CD14-positive monocyte (primary cell): ENCODE measurements at regions of chr1 and their contacts with region 1.

Region 1: DNA sequence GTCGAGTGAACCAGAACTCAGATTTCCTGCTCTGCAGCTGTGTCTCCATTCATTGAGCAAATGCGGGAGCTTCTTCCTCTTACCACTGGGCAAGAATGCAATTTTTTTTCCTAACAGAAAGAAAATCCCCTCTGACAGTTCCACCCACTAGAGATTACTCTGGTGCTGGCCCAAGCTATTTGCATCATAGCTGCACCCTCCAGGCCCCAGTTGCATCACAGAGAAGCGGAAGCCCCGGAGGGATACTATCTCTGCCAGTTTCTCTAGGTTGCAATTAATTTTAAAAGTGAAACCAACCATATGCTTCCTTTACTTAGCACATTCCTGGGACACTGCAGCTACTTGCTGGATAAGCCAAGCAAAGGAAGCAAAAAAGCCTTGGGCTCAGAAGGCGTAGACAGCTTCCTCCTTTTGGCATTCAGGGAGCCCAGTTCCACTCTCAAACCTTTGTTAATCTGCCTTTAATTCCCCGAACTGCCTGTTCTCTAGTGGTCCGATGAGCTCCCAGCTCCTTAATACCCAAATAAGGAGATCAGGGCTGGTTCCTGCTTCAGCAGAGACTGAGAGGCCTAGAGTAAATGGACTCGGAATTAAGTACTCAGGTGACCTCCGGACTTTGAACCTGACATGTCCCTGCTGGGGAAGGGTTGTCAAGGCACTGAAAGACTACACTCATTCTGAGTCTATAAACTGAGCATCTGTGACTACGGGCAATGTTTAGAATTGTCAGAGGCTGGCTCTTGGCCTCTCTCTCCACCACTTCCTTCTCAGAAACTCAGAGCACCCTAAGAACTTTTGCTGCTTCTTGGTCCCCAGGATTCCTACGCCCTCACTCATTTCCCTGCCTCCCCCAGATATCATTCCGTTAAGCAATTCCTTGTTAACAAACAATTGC is 72.5 kb upstream of the TNFSF18 start:
- DNase-seq: peak; percentile 92 to 96 (median 95)
- H3K4me3 ChIP-seq: peak overlapping the region; percentile 27 to 97 (median 73)
- H3K4me3 Mint-ChIP-seq: peak overlapping the region; percentile 76 to 86
- H3K27ac ChIP-seq: peak overlapping the region; percentile 59 to 94
- H3K27ac Mint-ChIP-seq: peak overlapping the region; percentile 94 to 99 (median 97)
- H3K4me1 ChIP-seq: peaks cover 17 to 20% of the 10 kb centered on the region in 2 donors
- H3K4me1 Mint-ChIP-seq: peaks cover 27% of the 10 kb centered on the region
- H3K27me3 ChIP-seq: no peaks in the 10 kb centered on the region
- H3K27me3 Mint-ChIP-seq: peaks cover 0 to 5% (median 1%) of the 10 kb centered on the region in 3 donors
- CTCF ChIP-seq: no peak

Region 2: GRCh38 chr1:172818841-172819527 is 304.2 kb before region 1 on chr1:
- intact Hi-C with region 1: loop called in 1 of 2 experiments (anchors 10 kb)
- DNase-seq: peak; percentile 77 to 82 (median 82)
- H3K4me3 ChIP-seq: no peak overlapping the region
- H3K4me3 Mint-ChIP-seq: no peak overlapping the region
- H3K27ac ChIP-seq: peak overlapping the region in 1 of 2 donors; percentile 73
- H3K27ac Mint-ChIP-seq: peak overlapping the region; percentile 43 to 91 (median 86)
- H3K4me1 ChIP-seq: peaks cover 15 to 23% of the 10 kb centered on the region in 2 donors
- H3K4me1 Mint-ChIP-seq: peaks cover 32% of the 10 kb centered on the region
- H3K27me3 ChIP-seq: no peaks in the 10 kb centered on the region
- H3K27me3 Mint-ChIP-seq: peaks cover 0 to 2% (median 2%) of the 10 kb centered on the region in 3 donors
- CTCF ChIP-seq: no peak

Region 3: GRCh38 chr1:173002891-173003838 is 120.0 kb before region 1 on chr1:
- intact Hi-C with region 1: loop called in 1 of 2 experiments (anchors 10 kb)
- DNase-seq: peak in 1 of 3 donors; percentile 37
- H3K4me3 ChIP-seq: no peak overlapping the region
- H3K4me3 Mint-ChIP-seq: no peak overlapping the region
- H3K27ac ChIP-seq: no peak overlapping the region
- H3K27ac Mint-ChIP-seq: no peak overlapping the region
- H3K4me1 ChIP-seq: no peaks in the 10 kb centered on the region
- H3K4me1 Mint-ChIP-seq: no peaks in the 10 kb centered on the region
- H3K27me3 ChIP-seq: no peaks in the 10 kb centered on the region
- H3K27me3 Mint-ChIP-seq: peaks cover 0 to 2% (median 0%) of the 10 kb centered on the region in 3 donors
- CTCF ChIP-seq: no peak

Region 4: GRCh38 chr1:173020138-173020750 is 103.0 kb before region 1 on chr1:
- intact Hi-C with region 1: loop called in 1 of 2 experiments (anchors 10 kb)
- DNase-seq: peak in 2 of 3 donors; percentile 43 to 59
- H3K4me3 ChIP-seq: peak overlapping the region in 2 of 3 experiments; percentile 35 to 59
- H3K4me3 Mint-ChIP-seq: peak overlapping the region; percentile 57 to 85
- H3K27ac ChIP-seq: peak overlapping the region; percentile 63 to 73
- H3K27ac Mint-ChIP-seq: peak overlapping the region; percentile 79 to 93 (median 88)
- H3K4me1 ChIP-seq: peaks cover 49 to 56% of the 10 kb centered on the region in 2 donors
- H3K4me1 Mint-ChIP-seq: peaks cover 46% of the 10 kb centered on the region
- H3K27me3 ChIP-seq: no peaks in the 10 kb centered on the region
- H3K27me3 Mint-ChIP-seq: no peaks in the 10 kb centered on the region
- CTCF ChIP-seq: no peak

Region 5: GRCh38 chr1:173050865-173051264 is 72.3 kb before region 1 on chr1 and contains the start of gene TNFSF18:
- intact Hi-C with region 1: loop called in 1 of 2 experiments (anchors 10 kb)
- DNase-seq: peak; percentile 34 to 64 (median 43)
- H3K4me3 ChIP-seq: no peak within 1 kb of the TSS
- H3K4me3 Mint-ChIP-seq: peak within 1 kb of the TSS in 1 of 2 donors; percentile 83
- H3K27ac ChIP-seq: no peak within 1 kb of the TSS
- H3K27ac Mint-ChIP-seq: peak within 1 kb of the TSS; percentile 18 to 84 (median 57)
- H3K4me1 ChIP-seq: peaks cover 33 to 53% of the 10 kb centered on the region in 2 donors
- H3K4me1 Mint-ChIP-seq: peaks cover 46% of the 10 kb centered on the region
- H3K27me3 ChIP-seq: no peaks in the 10 kb centered on the region
- H3K27me3 Mint-ChIP-seq: peaks cover 0 to 2% (median 0%) of the 10 kb centered on the region in 3 donors
- CTCF ChIP-seq: no peak
- polyA plus RNA-seq, gene TNFSF18: not detected

Region 6: GRCh38 chr1:173112129-173112528 is 11.1 kb before region 1 on chr1:
- intact Hi-C with region 1: loop called in 1 of 2 experiments (anchors 1 kb)
- DNase-seq: peak; percentile 84 to 91 (median 85)
- H3K4me3 ChIP-seq: no peak overlapping the region
- H3K4me3 Mint-ChIP-seq: peak overlapping the region in 1 of 2 donors; percentile 64
- H3K27ac ChIP-seq: peak overlapping the region in 1 of 2 donors; percentile 83
- H3K27ac Mint-ChIP-seq: peak overlapping the region; percentile 68 to 93 (median 87)
- H3K4me1 ChIP-seq: peaks cover 32 to 48% of the 10 kb centered on the region in 2 donors
- H3K4me1 Mint-ChIP-seq: peaks cover 39% of the 10 kb centered on the region
- H3K27me3 ChIP-seq: no peaks in the 10 kb centered on the region
- H3K27me3 Mint-ChIP-seq: peaks cover 0 to 2% (median 0%) of the 10 kb centered on the region in 3 donors
- CTCF ChIP-seq: no peak

Region 7: GRCh38 chr1:173190101-173190906 is 67.1 kb after region 1 on chr1:
- intact Hi-C with region 1: loop called in 1 of 2 experiments (anchors 10 kb)
- DNase-seq: peak; percentile 33 to 56 (median 42)
- H3K4me3 ChIP-seq: no peak overlapping the region
- H3K4me3 Mint-ChIP-seq: no peak overlapping the region
- H3K27ac ChIP-seq: peak overlapping the region in 1 of 2 donors; percentile 52
- H3K27ac Mint-ChIP-seq: peak overlapping the region in 5 of 7 donors; percentile 45 to 77 (median 72)
- H3K4me1 ChIP-seq: peaks cover 17 to 22% of the 10 kb centered on the region in 2 donors
- H3K4me1 Mint-ChIP-seq: peaks cover 32% of the 10 kb centered on the region
- H3K27me3 ChIP-seq: no peaks in the 10 kb centered on the region
- H3K27me3 Mint-ChIP-seq: no peaks in the 10 kb centered on the region
- CTCF ChIP-seq: no peak

Region 8: GRCh38 chr1:173241528-173242347 is 118.5 kb after region 1 on chr1:
- intact Hi-C with region 1: no loop called
- DNase-seq: no peak
- H3K4me3 ChIP-seq: no peak overlapping the region
- H3K4me3 Mint-ChIP-seq: no peak overlapping the region
- H3K27ac ChIP-seq: no peak overlapping the region
- H3K27ac Mint-ChIP-seq: peak overlapping the region in 1 of 7 donors; percentile 13
- H3K4me1 ChIP-seq: no peaks in the 10 kb centered on the region
- H3K4me1 Mint-ChIP-seq: peaks cover 10% of the 10 kb centered on the region
- H3K27me3 ChIP-seq: no peaks in the 10 kb centered on the region
- H3K27me3 Mint-ChIP-seq: no peaks in the 10 kb centered on the region
- CTCF ChIP-seq: no peak